Aorta (tissue), 5 donors: ENCODE measurements at regions of chr1 and their contacts with region 1.

Region 1: GRCh38 chr1:184982002-184982954 is 8.0 kb upstream of the NIBAN1 start:
- DNase-seq: peak; percentile 84 to 93
- ATAC-seq: peak; percentile 94
- H3K4me3 ChIP-seq: no peak overlapping the region
- H3K27ac ChIP-seq: no peak overlapping the region
- H3K4me1 ChIP-seq: no peaks in the 10 kb centered on the region
- H3K27me3 ChIP-seq: no peaks in the 10 kb centered on the region

Region 2: DNA sequence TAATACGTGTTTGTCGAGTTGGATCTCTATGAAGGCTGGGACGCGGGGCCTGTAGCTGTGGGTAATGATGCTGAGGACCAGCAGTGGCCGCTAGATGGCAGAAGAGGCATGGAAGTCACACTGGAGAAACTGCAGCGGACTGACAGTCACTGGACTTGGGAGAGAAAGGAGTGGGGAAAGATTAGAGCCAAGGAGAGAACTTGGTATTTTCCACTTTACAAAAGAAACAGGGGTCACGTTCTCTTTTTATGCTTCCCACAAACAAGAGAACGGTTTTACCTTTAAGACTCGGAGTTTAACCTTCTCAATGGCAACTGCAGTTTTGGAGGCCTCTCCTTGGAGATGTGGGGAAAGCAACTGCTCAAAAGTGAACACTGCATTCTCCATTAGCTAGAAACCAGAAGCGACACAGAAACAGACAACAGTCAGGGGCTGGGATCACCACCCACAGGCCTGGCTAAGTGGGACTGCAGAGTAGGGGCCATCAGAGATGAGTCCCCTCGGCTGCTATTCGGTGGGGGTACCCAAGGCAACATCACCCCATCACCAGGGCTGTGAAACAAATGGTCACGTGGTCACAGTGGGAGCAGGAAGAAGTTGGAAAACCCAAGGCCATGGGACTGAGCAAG is 176.5 kb before region 1 on chr1:
- intact Hi-C with region 1: loop called (anchors 1 to 2 kb)
- DNase-seq: peak; percentile 93 to 95
- ATAC-seq: peak; percentile 95
- H3K4me3 ChIP-seq: no peak overlapping the region
- H3K27ac ChIP-seq: peak overlapping the region in 1 of 2 donors; percentile 32
- H3K4me1 ChIP-seq: no peaks in the 10 kb centered on the region
- H3K27me3 ChIP-seq: no peaks in the 10 kb centered on the region